Right ventricle myocardium inferior (tissue), 1 donor: ENCODE measurements at regions of chr16 and their contacts with region 1.

Region 1: GRCh38 chr16:69838489-69838888 is 76.4 kb downstream of the WWP2 start:
- DNase-seq: no peak
- ATAC-seq: peak; percentile 35

Region 2: GRCh38 chr16:69861292-69862030 is 23.0 kb after region 1 on chr16:
- intact Hi-C with region 1: loop called (anchors 1 kb)
- DNase-seq: no peak
- ATAC-seq: peak; percentile 76